ENCODE measurements at regions of chr16 and their contacts with region 1.

Region 1: DNA sequence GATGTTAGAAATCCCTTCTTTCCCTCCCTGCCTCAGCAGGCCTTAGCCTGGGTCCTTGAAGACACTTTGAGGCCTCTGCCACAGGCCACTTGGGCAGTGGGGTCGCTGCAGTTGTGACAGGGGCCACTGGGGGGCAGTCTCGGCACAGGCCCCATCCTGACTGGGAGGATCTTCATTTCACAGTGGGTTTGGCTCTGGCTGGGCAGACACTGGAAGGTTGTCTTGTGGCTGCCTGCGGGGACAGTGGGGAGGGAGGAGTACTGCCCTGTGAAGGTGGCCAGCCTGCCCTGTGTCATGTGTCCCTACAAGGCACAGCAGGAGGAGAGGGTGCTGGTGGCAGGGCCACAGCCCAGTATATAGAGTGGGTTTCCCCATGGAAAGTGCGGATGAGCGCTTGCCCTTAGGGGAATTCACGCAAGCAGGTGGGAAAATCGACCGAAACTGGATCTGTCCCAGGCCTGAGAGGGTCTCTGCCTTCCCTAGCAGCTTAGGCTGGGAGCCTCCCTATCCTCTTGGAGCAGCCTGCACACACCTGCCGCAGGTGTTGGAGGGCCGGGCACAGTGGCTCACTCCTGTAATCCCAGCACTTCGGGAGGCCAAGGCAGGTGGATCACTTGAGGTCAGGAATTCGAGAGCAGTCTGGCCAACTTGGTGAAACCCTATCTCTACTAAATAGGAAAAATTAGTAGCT is 28.8 kb downstream of the GINS2 start:
- DNase-seq: peak; percentile 93
- H3K4me3 ChIP-seq: no peak overlapping the region
- H3K27ac ChIP-seq: no peak overlapping the region; a peak in 1 of 4 replicates
- H3K4me1 ChIP-seq: peaks cover 0 to 36% of the 10 kb centered on the region in 2 experiments; a peak in 1 of 4 replicates
- H3K27me3 ChIP-seq: no peaks in the 10 kb centered on the region
- CTCF ChIP-seq: peak; percentile 94
- EP300 ChIP-seq: no peak
- RAD21 ChIP-seq: peak; percentile 77

Region 2: GRCh38 chr16:85675251-85675927 is 15.4 kb after region 1 on chr16:
- CTCF ChIA-PET with region 1: interaction called, 61 read pairs
- POLR2A ChIA-PET with region 1: interaction called, 3 read pairs
- DNase-seq: no peak
- H3K4me3 ChIP-seq: no peak overlapping the region
- H3K27ac ChIP-seq: peak overlapping the region in 1 of 2 experiments; percentile 96; a peak in 2 of 4 replicates
- H3K4me1 ChIP-seq: peaks cover 9 to 47% of the 10 kb centered on the region in 2 experiments; a peak in 2 of 4 replicates
- H3K27me3 ChIP-seq: no peaks in the 10 kb centered on the region
- CTCF ChIP-seq: peak; percentile 57
- EP300 ChIP-seq: no peak
- RAD21 ChIP-seq: peak; percentile 49

Measured in SK-N-SH (cell line).